ENCODE measurements at regions of chr19 and their contacts with region 1.

Region 1: DNA sequence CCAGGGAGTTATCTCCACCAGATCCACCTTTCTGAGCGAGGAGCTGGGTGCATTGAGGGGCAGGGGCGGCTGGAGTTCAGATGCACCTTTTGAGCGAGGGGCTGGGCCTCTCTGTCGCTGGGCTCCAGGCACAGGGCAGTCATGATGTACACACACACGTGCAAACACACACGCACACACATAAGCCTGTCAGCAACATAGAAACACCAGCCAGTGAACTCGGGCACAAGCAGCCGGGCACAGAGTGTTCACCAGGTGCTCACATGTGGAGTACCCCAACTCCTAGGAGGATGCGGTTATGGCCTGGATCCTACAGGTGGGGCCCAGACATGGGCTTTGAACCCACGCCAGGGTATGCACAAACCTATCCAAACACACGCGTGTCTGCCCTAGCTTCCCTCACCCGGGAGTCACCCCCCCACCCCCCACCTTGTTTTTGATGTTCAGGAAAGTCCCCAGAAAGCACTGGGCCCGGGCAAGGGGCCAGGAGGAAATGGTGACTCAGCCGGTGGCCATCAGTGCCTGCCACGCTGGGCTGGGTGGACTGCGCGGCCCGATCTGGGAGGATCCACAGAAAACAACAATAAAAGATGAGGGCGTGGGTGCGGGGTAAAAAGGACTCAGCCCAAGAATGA is 13.3 kb downstream of the ARRDC2 start:
- DNase-seq: peak; percentile 93

Region 2: GRCh38 chr19:18049385-18049784 is 28.1 kb after region 1 on chr19:
- intact Hi-C with region 1: loop called (anchors 1 kb)
- DNase-seq: peak; percentile 96

Measured in cardiac septum (tissue), 1 donor.